Sigmoid colon (tissue), 7 donors: ENCODE measurements at regions of chr1 and their contacts with region 1.

Region 1: DNA sequence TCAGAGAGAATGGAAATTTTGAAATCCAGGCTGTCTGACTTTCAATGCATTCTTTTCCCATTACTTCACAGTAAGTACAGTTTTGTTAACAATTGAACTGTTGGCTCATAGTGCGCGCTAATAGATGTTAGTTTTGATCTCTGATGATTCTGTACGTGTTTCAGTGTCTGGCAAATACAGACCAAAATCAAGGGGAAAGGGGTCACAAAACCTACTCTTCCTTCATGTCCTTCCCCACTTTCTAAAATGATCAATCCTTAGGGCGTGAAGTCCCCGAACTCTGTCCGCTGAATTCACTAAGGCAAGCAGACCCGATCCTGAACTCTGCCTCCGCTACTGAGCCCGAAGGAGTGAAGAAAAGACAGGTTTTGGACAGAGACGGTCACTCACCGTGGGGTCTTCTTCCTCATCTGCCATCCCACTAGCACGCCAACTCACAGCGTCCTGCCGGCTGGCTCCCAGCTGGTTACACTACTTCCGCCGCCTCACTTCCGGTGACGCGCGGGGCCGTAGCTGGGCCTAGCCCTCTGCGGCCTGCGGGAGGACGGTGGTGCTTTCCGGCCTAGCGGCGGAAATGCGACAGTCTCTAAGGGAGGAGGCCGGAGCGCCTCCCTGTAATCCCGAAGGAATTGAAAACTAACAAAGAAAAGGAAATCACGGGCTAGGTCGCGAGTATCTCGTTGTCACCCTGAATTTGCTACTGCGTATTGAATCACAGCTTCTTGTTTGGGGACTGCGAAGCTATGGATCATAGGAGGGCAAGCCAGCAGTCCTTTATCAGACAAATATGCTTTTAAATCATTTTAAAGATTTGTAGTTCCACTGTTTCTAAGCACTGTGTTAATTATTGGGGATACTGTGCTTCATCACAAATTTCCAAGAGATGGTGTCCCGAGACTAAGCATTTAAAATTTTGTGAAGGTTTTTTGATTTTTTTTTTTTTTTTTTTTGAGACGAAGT is at the start of gene TAF13:
- DNase-seq: peak; percentile 97
- H3K4me3 ChIP-seq: peak within 1 kb of the TSS; percentile 65 to 68 (median 66)
- H3K27ac ChIP-seq: peak within 1 kb of the TSS; percentile 82 to 92 (median 89)
- H3K4me1 ChIP-seq: peaks cover 0 to 15% (median 13%) of the 10 kb centered on the region in 4 donors
- H3K27me3 ChIP-seq: no peaks in the 10 kb centered on the region
- CTCF ChIP-seq: peak; percentile 42 to 75 (median 66)
- EP300 ChIP-seq: peak in 1 of 4 donors; percentile 50
- POLR2A ChIP-seq: peak; percentile 95 to 98
- total RNA-seq, gene TAF13: 19.9 to 44.6 (median 39.0) TPM

Region 2: DNA sequence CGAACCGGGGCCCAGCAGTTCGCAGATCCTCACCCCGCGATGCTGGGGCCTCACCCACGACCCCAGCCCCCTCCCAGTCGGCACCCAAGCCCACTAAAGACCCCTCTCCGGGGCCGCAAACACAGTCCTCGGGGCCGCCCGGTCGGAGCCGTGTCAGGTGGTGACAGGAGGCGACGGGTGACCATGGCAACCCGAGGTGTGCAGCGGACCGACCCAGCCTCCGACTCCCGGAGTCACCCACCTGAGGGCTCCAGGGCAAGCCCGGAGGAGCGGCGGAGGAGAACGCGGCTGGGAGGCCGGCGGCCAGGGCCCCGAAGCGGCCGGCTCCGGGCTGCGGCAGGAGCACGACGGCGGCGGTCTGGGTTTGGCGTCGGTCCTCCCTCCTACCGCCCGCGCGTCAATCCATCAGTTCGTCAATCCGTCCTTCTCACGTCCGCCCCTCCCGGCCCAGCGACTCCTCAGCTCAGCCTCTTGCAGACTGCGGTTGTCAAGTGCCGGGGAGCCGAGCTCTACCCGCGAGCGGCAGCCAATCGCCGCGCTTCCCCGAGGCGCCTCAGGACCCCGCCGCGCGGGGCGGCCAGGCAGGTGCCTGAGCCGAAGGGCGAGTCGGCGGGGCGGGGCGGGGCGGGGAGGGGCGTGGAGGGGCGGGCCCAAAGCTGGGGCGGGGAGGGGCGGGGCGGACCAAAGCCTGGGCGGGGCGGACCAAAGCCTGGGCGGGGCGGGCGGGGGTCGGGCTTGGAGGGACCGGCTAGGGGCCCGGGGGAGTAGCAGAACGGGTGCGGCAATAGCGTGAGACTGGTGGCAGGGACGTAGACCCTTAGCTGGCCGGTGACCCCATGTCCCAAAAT is 34.0 kb before region 1 on chr1 and contains the start of gene WDR47:
- intact Hi-C with region 1: loop called (anchors 2 kb)
- DNase-seq: peak; percentile 97
- H3K4me3 ChIP-seq: peak within 1 kb of the TSS; percentile 81 to 100 (median 99)
- H3K27ac ChIP-seq: peak within 1 kb of the TSS; percentile 87 to 93 (median 91)
- H3K4me1 ChIP-seq: peaks cover 0 to 18% (median 13%) of the 10 kb centered on the region in 4 donors
- H3K27me3 ChIP-seq: no peaks in the 10 kb centered on the region
- CTCF ChIP-seq: no peak
- EP300 ChIP-seq: no peak
- POLR2A ChIP-seq: peak; percentile 85 to 91
- total RNA-seq, gene WDR47: 16.0 to 34.3 (median 24.0) TPM

Region 3: DNA sequence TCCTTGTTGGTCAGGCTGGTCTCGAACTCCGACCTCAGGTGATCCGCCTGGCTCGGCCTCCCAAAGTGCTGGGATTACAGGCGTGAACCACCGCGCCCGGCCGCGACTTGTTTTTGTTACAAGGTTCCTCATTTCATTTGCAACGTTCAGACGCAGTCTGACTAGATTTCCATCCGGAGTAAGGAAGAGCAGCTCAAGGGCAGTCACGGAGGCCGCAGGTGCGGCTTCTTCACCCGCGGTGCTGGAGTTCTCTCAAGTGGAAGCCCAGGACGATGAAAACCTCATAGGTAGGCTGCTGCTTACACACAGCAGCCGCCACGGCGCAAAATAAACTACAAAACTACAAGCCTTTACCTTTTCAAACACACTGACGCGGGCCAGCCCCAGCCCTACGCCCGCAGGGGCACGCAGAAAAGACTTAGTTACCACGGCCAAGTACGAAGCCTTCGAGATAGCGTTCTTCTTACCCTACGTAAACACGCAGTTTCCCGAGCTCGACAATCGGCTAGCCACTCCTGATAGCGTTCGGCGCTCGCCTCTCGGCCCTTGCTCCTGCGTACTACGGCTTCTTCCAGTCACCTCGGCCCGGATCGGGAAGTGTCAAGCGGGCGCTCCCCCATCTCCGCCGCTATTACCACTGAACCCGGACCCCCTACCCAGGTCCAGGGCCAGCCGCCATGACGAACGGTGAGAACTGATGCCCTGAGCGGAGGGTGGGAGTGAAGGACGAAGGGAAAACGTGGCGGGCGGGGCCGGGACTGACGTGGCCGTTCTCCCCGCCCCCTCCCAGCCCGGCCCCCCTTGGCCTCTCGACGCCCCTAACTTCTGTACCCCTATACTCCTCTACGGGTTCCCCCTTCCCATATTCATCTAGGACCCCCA is 14.6 kb after region 1 on chr1 and contains the start of gene TMEM167B:
- intact Hi-C with region 1: loop called (anchors 1 kb)
- DNase-seq: peak; percentile 96
- H3K4me3 ChIP-seq: peak within 1 kb of the TSS; percentile 70 to 88 (median 78)
- H3K27ac ChIP-seq: peak within 1 kb of the TSS; percentile 93 to 97 (median 96)
- H3K4me1 ChIP-seq: peaks cover 0 to 55% (median 42%) of the 10 kb centered on the region in 4 donors
- H3K27me3 ChIP-seq: no peaks in the 10 kb centered on the region
- CTCF ChIP-seq: no peak
- EP300 ChIP-seq: peak in 2 of 4 donors; percentile 3 to 24
- POLR2A ChIP-seq: peak; percentile 56 to 82
- total RNA-seq, gene TMEM167B: 21.9 to 33.2 (median 26.8) TPM

Region 4: GRCh38 chr1:109099938-109100773 is 24.3 kb after region 1 on chr1:
- intact Hi-C with region 1: loop called (anchors 1 kb)
- DNase-seq: peak; percentile 99
- H3K4me3 ChIP-seq: peak overlapping the region; percentile 66 to 97 (median 87)
- H3K27ac ChIP-seq: peak overlapping the region; percentile 90 to 99 (median 95)
- H3K4me1 ChIP-seq: peaks cover 0 to 22% (median 15%) of the 10 kb centered on the region in 4 donors
- H3K27me3 ChIP-seq: no peaks in the 10 kb centered on the region
- CTCF ChIP-seq: peak; percentile 73 to 88 (median 78)
- EP300 ChIP-seq: peak in 1 of 4 donors; percentile 68
- POLR2A ChIP-seq: peak; percentile 97 to 98

Region 5: DNA sequence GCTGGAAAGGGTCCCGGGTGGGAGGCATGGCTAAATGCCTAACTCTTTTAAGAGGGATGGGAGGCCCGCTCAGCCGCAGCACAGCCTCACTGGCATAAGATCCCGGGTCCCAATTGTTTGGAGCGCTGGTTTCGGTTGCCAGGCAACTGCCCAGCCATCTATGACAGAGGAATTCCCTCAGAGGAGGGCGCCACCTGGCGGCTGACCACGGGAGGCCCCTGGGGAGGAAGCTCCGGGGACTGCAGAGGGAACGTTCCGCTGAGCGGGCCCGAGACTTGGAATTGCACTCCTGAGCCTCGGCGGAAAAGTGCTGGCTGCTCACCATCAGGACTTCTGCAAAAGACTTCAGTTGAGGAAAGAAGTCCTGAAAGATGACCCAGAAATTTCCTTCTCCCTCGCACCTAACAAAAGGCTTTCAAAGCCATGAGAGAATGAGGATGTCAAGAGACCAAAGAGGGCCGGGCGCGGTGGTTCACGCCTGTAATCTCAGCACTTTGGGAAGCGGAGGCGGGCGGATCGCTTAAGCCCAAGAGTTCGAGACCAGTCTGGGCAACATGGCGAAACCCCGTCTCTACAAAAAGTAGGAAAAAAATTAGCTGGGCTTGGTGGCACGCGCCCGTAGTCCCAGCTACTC is 37.0 kb after region 1 on chr1:
- intact Hi-C with region 1: loop called (anchors 5 kb)
- DNase-seq: peak; percentile 96
- H3K4me3 ChIP-seq: peak overlapping the region; percentile 7 to 45 (median 36)
- H3K27ac ChIP-seq: peak overlapping the region in 3 of 4 donors; percentile 46 to 68 (median 50)
- H3K4me1 ChIP-seq: peaks cover 0 to 24% (median 24%) of the 10 kb centered on the region in 4 donors
- H3K27me3 ChIP-seq: peaks cover 0 to 42% (median 34%) of the 10 kb centered on the region in 3 donors
- CTCF ChIP-seq: peak; percentile 86 to 95 (median 90)
- EP300 ChIP-seq: no peak
- POLR2A ChIP-seq: no peak